ENCODE measurements at regions of chr7 and their contacts with region 1.

Region 1: GRCh38 chr7:106947244-106947728 is 82.2 kb downstream of the PIK3CG start:
- DNase-seq: peak in 5 of 9 experiments; percentile 1 to 67 (median 37)
- ATAC-seq: peak; percentile 66
- H3K4me3 ChIP-seq: no peak overlapping the region
- H3K4me3 Mint-ChIP-seq: no peak overlapping the region
- H3K27ac ChIP-seq: no peak overlapping the region
- H3K27ac Mint-ChIP-seq: no peak overlapping the region
- H3K4me1 ChIP-seq: no peaks in the 10 kb centered on the region
- H3K4me1 Mint-ChIP-seq: no peaks in the 10 kb centered on the region
- H3K27me3 ChIP-seq: no peaks in the 10 kb centered on the region
- H3K27me3 Mint-ChIP-seq: no peaks in the 10 kb centered on the region
- CTCF ChIP-seq: peak; percentile 39

Region 2: DNA sequence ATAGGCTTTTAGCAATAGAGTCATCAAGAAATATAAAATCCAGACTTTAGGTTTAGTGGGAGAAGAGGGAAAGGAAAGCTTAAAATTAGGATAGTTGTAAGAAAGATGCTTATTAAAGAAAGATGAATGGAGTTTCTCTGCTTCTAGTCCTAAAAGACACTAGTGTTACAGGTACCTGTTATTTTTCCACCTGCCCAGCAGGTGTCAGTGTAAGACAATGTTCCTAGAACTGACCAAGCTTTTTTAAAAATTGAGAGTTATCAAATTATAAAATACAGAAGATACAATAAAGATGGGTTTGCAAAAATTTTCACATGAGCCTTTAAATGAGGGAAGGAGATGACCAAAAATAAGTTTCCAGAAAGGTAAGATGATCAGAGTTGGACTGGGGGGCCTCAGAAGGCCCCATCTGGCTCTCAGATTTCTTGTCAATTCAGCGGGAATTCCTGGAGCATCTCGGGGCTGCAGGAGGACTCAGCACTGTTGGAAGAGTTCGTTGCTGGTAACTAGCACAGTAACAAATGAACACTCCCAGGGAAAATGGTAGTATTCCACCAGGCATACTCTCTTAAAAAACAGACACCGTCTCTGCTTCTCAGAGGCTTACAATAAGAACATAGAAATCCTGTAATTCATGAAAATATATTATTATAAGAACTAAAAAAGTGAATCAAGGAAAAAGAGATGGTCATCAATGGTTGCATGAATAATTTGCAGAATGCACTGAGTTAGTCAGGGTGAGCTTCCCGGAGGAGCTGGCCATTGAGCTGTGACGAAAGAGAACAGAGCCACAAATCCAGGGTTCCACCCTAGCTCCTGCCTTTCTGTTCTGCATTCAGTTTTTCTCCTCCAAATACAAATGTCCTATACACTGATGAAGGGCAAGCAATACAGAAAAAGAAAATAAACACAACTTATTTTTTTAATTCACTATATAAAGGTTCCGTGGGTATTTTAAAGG is 154.0 kb before region 1 on chr7:
- CTCF ChIA-PET with region 1: interaction called, 10 read pairs
- POLR2A ChIA-PET with region 1: no interaction called
- intact Hi-C with region 1: loop called in 1 of 2 experiments (anchors 2 kb)
- DNase-seq: peak in 6 of 9 experiments; percentile 16 to 75 (median 42)
- ATAC-seq: peak; percentile 82
- H3K4me3 ChIP-seq: no peak overlapping the region
- H3K4me3 Mint-ChIP-seq: no peak overlapping the region
- H3K27ac ChIP-seq: no peak overlapping the region
- H3K27ac Mint-ChIP-seq: no peak overlapping the region
- H3K4me1 ChIP-seq: no peaks in the 10 kb centered on the region
- H3K4me1 Mint-ChIP-seq: peaks cover 3% of the 10 kb centered on the region
- H3K27me3 ChIP-seq: no peaks in the 10 kb centered on the region
- H3K27me3 Mint-ChIP-seq: no peaks in the 10 kb centered on the region
- CTCF ChIP-seq: peak; percentile 88

Measured in CD8-positive, alpha-beta T cell (primary cell).